Activated CD4-positive, alpha-beta T cell treated with anti-CD3 and anti-CD28 coated beads, Interleukin-2, amount 10 ng/mL, durations not matched to agents 24 days and 14 days (primary cell): ENCODE measurements at regions of chr3 and their contacts with region 1.

Region 1: DNA sequence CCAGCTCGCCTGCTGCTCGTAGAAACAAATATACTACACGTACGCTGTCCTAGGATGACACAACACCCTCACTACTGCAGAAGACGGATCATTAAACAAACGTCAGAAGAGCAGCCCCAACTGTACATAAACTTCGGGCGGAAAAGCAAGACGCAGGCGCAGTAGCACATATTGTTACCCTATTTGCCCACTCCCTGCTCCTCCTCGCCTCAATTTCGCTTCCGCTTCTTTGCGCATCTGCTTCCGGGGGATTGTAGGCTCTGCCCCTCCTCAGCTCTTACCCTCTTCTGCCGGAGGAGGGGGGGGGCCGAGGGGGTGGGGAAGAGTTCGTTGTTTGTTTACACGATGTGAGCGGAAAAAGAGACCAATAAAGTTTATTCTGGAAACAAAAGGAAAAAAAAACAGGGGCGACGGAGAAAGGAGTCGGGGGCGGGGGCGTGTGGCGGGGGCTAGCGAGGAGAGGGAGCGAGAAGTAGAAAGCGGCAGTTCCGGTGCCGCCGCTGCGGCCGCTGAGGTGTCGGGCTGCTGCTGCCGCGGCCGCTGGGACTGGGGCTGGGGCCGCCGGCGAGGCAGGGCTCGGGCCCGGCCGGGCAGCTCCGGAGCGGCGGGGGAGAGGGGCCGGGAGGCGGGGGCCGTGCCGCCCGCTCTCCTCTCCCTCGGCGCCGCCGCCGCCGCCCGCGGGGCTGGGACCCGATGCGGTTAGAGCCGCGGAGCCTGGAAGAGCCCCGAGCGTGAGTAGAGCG is at the start of gene PIK3CA:
- DNase-seq: peak; percentile 97
- H3K4me3 Mint-ChIP-seq: peak within 1 kb of the TSS; percentile 91
- H3K27ac Mint-ChIP-seq: peak within 1 kb of the TSS; percentile 95
- H3K4me1 Mint-ChIP-seq: peaks cover 26% of the 10 kb centered on the region
- H3K27me3 Mint-ChIP-seq: peaks cover 19% of the 10 kb centered on the region
- total RNA-seq, gene PIK3CA: 17.3 and 18.5 TPM in 2 replicates

Region 2: GRCh38 chr3:177906126-177906511 is 1241.9 kb before region 1 on chr3:
- intact Hi-C with region 1: no loop called
- DNase-seq: no peak
- H3K4me3 Mint-ChIP-seq: no peak overlapping the region
- H3K27ac Mint-ChIP-seq: no peak overlapping the region
- H3K4me1 Mint-ChIP-seq: no peaks in the 10 kb centered on the region
- H3K27me3 Mint-ChIP-seq: no peaks in the 10 kb centered on the region

Region 3: GRCh38 chr3:179000144-179000543 is 147.9 kb before region 1 on chr3:
- intact Hi-C with region 1: loop called (anchors 1 kb)
- DNase-seq: no peak
- H3K4me3 Mint-ChIP-seq: no peak overlapping the region
- H3K27ac Mint-ChIP-seq: peak overlapping the region; percentile 43
- H3K4me1 Mint-ChIP-seq: peaks cover 9% of the 10 kb centered on the region
- H3K27me3 Mint-ChIP-seq: peaks cover 8% of the 10 kb centered on the region

Region 4: GRCh38 chr3:179071550-179072397 is 76.3 kb before region 1 on chr3 and contains the start of gene ZMAT3:
- intact Hi-C with region 1: loop called (anchors 1 kb)
- DNase-seq: peak; percentile 96
- H3K4me3 Mint-ChIP-seq: peak within 1 kb of the TSS; percentile 99
- H3K27ac Mint-ChIP-seq: peak within 1 kb of the TSS; percentile 96
- H3K4me1 Mint-ChIP-seq: peaks cover 35% of the 10 kb centered on the region
- H3K27me3 Mint-ChIP-seq: no peaks in the 10 kb centered on the region
- total RNA-seq, gene ZMAT3: 11.8 and 13.1 TPM in 2 replicates

Region 5: DNA sequence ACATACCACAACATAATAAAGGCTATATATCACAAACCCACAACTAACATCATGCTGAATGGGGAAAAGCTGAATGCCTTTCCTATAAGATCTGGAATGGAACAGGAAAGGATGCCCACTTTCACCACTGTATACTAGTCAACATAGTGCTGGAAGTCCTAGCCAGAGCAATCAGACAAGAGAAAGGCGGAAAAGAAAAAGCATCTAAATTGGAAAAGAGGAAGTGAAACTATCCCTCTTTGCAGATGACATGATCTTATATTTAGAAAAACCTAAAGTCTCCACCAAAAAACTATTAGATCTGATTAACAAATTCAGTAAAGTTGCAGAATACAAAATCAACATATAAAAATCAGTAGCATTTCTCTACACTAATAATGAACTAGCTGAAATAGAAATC is 14.5 kb before region 1 on chr3:
- intact Hi-C with region 1: no loop called
- DNase-seq: no peak
- H3K4me3 Mint-ChIP-seq: no peak overlapping the region
- H3K27ac Mint-ChIP-seq: no peak overlapping the region
- H3K4me1 Mint-ChIP-seq: peaks cover 5% of the 10 kb centered on the region
- H3K27me3 Mint-ChIP-seq: peaks cover 16% of the 10 kb centered on the region

Region 6: DNA sequence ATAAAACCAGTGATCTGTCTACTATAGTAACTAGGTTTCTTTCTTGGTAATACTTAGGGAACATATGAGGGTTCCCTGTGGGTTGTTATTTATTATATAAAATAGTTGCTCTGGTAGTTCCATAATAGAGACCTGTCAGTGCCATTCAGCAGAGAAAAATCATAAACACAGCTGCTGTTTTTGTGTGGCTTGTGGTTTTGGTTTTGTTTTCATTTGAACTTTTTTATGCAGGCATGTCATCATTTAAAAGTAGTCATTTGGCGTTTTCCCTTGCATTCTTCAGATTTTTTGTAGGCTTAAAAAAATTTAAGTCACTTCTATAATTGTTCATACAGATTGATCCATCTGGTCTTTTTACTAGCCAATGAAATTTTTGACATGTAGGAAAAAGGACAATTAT is 48.1 kb after region 1 on chr3:
- intact Hi-C with region 1: loop called (anchors 1 kb)
- DNase-seq: peak; percentile 80
- H3K4me3 Mint-ChIP-seq: peak overlapping the region; percentile 35
- H3K27ac Mint-ChIP-seq: no peak overlapping the region
- H3K4me1 Mint-ChIP-seq: peaks cover 25% of the 10 kb centered on the region
- H3K27me3 Mint-ChIP-seq: no peaks in the 10 kb centered on the region

Region 7: DNA sequence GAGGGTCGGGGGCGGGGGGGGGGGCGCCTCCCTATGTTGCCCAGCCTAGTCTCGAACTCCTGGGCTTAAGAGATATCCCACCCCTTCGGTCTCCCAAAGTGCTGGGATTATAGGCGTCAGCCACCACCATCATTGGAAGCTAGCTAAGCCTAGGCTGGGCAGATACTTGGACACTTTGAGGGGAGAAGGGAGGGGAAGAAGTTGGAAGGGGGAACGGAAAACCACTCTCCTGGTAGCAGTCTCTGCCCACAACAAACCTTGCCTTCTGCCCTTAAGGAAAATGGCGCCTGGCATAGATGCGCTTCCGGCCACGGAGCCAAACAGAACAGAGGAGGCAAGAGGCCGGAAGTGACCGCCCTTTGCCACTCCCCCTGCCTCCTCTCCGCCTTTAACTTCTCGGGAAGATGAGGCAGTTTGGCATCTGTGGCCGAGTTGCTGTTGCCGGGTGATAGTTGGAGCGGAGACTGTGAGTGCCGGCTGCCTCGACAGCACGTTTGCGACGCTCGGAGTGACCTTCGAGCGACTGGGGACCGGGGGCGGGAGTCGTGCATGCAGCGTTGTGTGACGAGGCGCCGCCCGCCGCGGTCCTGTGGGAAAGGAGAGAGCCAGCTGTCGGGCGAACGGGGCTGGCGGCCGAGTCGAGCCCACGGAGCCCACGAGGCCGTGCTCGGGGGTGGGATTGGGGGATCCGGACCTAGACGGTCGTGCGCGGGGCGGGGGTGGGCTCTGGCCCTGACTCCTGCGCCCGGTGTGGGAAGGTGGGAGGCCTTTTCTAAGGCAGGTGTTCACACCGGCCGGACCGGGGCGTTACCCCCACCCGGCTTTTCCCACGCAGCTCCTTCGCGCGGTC is 199.5 kb after region 1 on chr3 and contains the start of gene MFN1:
- intact Hi-C with region 1: loop called (anchors 1 kb)
- DNase-seq: peak; percentile 97
- H3K4me3 Mint-ChIP-seq: peak within 1 kb of the TSS; percentile 100
- H3K27ac Mint-ChIP-seq: peak within 1 kb of the TSS; percentile 98
- H3K4me1 Mint-ChIP-seq: peaks cover 14% of the 10 kb centered on the region
- H3K27me3 Mint-ChIP-seq: no peaks in the 10 kb centered on the region
- total RNA-seq, gene MFN1: 36.2 and 37.0 TPM in 2 replicates

Region 8: DNA sequence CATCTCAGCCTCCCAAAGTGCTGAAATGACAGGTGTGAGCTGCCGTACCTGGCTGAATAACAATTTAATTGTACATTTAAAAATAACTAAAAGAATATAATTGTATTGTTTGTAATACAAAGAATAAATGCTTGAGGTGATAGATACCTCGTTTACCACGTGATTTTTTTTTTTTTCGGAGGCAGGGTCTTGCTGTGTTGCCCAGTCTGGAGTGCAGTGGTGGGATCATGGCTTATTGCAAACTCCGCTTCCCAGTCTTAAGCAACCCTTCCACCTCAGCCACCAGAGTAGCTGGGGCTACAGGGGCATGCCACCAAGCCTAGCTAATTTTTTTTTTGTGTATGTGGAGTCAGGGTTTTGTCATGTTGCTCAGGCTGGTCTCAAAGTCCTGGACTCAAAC is 215.3 kb after region 1 on chr3:
- intact Hi-C with region 1: no loop called
- DNase-seq: no peak
- H3K4me3 Mint-ChIP-seq: no peak overlapping the region
- H3K27ac Mint-ChIP-seq: no peak overlapping the region
- H3K4me1 Mint-ChIP-seq: no peaks in the 10 kb centered on the region
- H3K27me3 Mint-ChIP-seq: no peaks in the 10 kb centered on the region

Region 9: GRCh38 chr3:179373938-179374337 is 225.9 kb after region 1 on chr3:
- intact Hi-C with region 1: no loop called
- DNase-seq: no peak
- H3K4me3 Mint-ChIP-seq: no peak overlapping the region
- H3K27ac Mint-ChIP-seq: no peak overlapping the region
- H3K4me1 Mint-ChIP-seq: no peaks in the 10 kb centered on the region
- H3K27me3 Mint-ChIP-seq: no peaks in the 10 kb centered on the region

Region 10: GRCh38 chr3:180912304-180913296 is 1764.6 kb after region 1 on chr3 and contains the start of gene FXR1:
- intact Hi-C with region 1: loop called (anchors 2 kb)
- DNase-seq: peak; percentile 94
- H3K4me3 Mint-ChIP-seq: peak within 1 kb of the TSS; percentile 98
- H3K27ac Mint-ChIP-seq: peak within 1 kb of the TSS; percentile 97
- H3K4me1 Mint-ChIP-seq: peaks cover 29% of the 10 kb centered on the region
- H3K27me3 Mint-ChIP-seq: no peaks in the 10 kb centered on the region
- total RNA-seq, gene FXR1: 149 and 161 TPM in 2 replicates